IMR-90 (cell line): ENCODE measurements at regions of chr3 and their contacts with region 1.

Region 1: DNA sequence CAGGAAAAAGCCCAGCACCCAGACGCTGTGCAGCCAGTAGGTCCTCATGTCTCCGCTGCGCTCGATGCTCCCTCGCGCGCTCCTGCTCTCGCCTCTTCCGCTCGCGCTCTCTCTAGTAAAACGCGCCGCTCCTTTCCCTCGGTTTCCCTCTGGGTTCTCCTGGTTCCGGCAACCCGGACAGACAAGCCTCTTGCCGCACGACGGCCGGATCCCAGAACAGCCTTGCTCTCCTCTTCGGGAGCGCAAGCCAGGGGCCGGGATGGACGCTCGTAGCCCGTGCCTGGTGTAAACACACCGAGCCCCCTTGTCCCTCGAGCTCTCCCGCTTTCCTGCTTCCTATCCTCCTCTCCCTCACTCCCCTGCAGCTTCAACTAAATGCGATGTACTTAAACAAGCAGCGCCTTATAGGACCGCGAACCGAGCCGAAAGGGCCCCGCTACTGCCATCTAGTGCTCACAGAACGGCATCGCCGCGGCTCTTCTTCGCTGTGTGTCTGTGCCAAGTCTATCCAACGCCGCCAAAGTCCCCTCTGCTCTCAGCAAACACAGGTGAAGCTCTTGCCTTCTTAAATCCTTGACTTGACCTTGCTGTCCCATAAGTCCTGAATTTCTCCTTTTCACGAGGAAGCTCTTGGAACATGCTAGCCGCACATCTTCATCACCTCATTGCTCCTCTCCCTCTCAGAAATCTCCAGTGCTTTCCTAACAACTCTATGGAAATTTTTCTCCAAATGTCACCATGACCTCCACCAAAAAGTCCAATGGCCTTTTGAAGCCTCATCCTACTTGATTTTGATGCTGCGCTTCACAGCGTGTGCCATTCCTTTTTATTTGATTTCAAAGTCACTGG is 1037.2 kb downstream of the IGSF11 start:
- DNase-seq: peak; percentile 86
- ATAC-seq: peak; percentile 84
- H3K4me3 ChIP-seq: peak overlapping the region; percentile 72
- H3K27ac ChIP-seq: peak overlapping the region; percentile 42
- H3K4me1 ChIP-seq: peaks cover 4% of the 10 kb centered on the region; the same call in 1 of the 2 replicates
- H3K27me3 ChIP-seq: no peaks in the 10 kb centered on the region
- CTCF ChIP-seq: peak; percentile 86
- POLR2A ChIP-seq: peak; percentile 40; the same call in 1 of the 2 replicates
- RAD21 ChIP-seq: peak; percentile 87

Region 2: DNA sequence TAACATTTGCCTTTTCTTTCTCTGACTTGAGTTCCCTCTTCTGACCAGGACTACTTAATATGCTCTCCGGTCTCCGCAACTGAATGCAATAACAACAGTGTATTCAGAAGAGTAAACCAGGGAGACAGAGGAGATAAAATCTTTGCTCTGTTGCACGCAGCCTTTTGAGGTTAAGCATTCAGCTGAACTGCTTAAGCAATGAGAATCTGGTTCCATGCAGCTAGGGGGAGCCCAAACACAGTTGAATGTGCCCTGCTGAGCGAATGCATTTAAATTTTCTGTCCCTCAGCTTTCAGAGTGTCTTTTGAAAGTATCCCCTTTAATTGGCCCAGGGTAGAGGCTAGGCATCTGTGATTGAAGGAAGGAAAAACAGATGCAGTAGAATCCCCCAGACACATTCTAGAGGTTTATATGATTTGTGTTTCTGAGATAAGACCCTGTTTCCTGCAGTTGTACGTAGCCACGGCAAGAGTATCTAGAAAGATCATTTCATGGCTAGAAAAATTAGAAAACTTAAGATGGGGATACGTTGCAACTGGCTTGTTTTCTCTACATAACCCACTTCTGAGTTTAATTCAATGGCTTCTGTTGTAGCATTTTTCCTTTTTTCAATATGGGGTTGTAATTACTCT is 978.2 kb before region 1 on chr3:
- CTCF ChIA-PET with region 1: no interaction called
- POLR2A ChIA-PET with region 1: no interaction called
- dilution Hi-C with region 1: no loop called
- in situ Hi-C with region 1: loop called (anchors 10 kb)
- intact Hi-C with region 1: loop called (anchors 2 kb)
- DNase-seq: peak; percentile 76
- ATAC-seq: peak; percentile 94
- H3K4me3 ChIP-seq: no peak overlapping the region
- H3K27ac ChIP-seq: no peak overlapping the region
- H3K4me1 ChIP-seq: no peaks in the 10 kb centered on the region
- H3K27me3 ChIP-seq: no peaks in the 10 kb centered on the region
- CTCF ChIP-seq: peak; percentile 85
- POLR2A ChIP-seq: no peak
- RAD21 ChIP-seq: peak; percentile 92

Region 3: GRCh38 chr3:117526470-117527079 is 470.9 kb before region 1 on chr3:
- CTCF ChIA-PET with region 1: no interaction called
- POLR2A ChIA-PET with region 1: no interaction called
- dilution Hi-C with region 1: no loop called
- in situ Hi-C with region 1: no loop called
- intact Hi-C with region 1: loop called (anchors 1 kb)
- DNase-seq: peak; percentile 55
- ATAC-seq: peak; percentile 48; the same call in 1 of the 2 replicates
- H3K4me3 ChIP-seq: no peak overlapping the region
- H3K27ac ChIP-seq: no peak overlapping the region
- H3K4me1 ChIP-seq: peaks cover 8% of the 10 kb centered on the region
- H3K27me3 ChIP-seq: no peaks in the 10 kb centered on the region
- CTCF ChIP-seq: peak; percentile 70
- POLR2A ChIP-seq: no peak
- RAD21 ChIP-seq: peak; percentile 73

Region 4: GRCh38 chr3:117692416-117692995 is 304.9 kb before region 1 on chr3:
- CTCF ChIA-PET with region 1: no interaction called
- POLR2A ChIA-PET with region 1: no interaction called
- dilution Hi-C with region 1: no loop called
- in situ Hi-C with region 1: no loop called
- intact Hi-C with region 1: no loop called
- DNase-seq: peak; percentile 94
- ATAC-seq: peak; percentile 76
- H3K4me3 ChIP-seq: no peak overlapping the region
- H3K27ac ChIP-seq: peak overlapping the region; percentile 55
- H3K4me1 ChIP-seq: peaks cover 20% of the 10 kb centered on the region
- H3K27me3 ChIP-seq: no peaks in the 10 kb centered on the region
- CTCF ChIP-seq: no peak
- POLR2A ChIP-seq: peak; percentile 82
- RAD21 ChIP-seq: no peak

Region 5: DNA sequence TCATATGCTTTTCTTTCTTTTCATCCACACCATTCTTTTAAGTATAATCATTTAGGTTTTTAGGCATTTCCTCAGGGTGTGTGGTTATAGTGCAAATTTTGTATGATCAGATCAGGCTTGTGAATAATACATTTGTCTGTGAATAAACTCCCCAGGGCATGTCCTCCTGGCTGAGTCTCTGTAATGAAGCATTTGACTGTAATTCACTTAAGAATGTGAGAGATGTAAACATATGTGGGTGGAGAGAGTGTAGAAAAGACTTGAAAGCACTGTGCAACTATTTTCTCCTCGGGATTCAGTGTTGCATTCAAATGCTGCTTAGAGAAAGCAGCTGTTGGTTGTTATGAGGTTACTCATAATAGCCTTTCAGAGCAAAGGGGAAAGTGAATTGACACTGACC is 291.4 kb before region 1 on chr3:
- CTCF ChIA-PET with region 1: no interaction called
- POLR2A ChIA-PET with region 1: no interaction called
- dilution Hi-C with region 1: no loop called
- in situ Hi-C with region 1: no loop called
- intact Hi-C with region 1: loop called (anchors 5 kb)
- DNase-seq: peak; percentile 97
- ATAC-seq: peak; percentile 94
- H3K4me3 ChIP-seq: no peak overlapping the region
- H3K27ac ChIP-seq: peak overlapping the region; percentile 62; the same call in 1 of the 2 replicates
- H3K4me1 ChIP-seq: peaks cover 8% of the 10 kb centered on the region
- H3K27me3 ChIP-seq: no peaks in the 10 kb centered on the region
- CTCF ChIP-seq: no peak
- POLR2A ChIP-seq: no peak
- RAD21 ChIP-seq: no peak

Region 6: GRCh38 chr3:117868766-117869165 is 128.7 kb before region 1 on chr3:
- CTCF ChIA-PET with region 1: no interaction called
- POLR2A ChIA-PET with region 1: no interaction called
- dilution Hi-C with region 1: no loop called
- in situ Hi-C with region 1: no loop called
- intact Hi-C with region 1: loop called (anchors 10 kb)
- DNase-seq: peak; percentile 60
- ATAC-seq: peak; percentile 61
- H3K4me3 ChIP-seq: no peak overlapping the region
- H3K27ac ChIP-seq: no peak overlapping the region
- H3K4me1 ChIP-seq: peaks cover 2% of the 10 kb centered on the region
- H3K27me3 ChIP-seq: no peaks in the 10 kb centered on the region
- CTCF ChIP-seq: no peak
- POLR2A ChIP-seq: no peak
- RAD21 ChIP-seq: no peak

Region 7: GRCh38 chr3:117962750-117963149 is 34.7 kb before region 1 on chr3:
- CTCF ChIA-PET with region 1: no interaction called
- POLR2A ChIA-PET with region 1: no interaction called
- dilution Hi-C with region 1: no loop called
- in situ Hi-C with region 1: no loop called
- intact Hi-C with region 1: no loop called
- DNase-seq: peak; percentile 79
- ATAC-seq: peak; percentile 79
- H3K4me3 ChIP-seq: no peak overlapping the region
- H3K27ac ChIP-seq: no peak overlapping the region
- H3K4me1 ChIP-seq: peaks cover 4% of the 10 kb centered on the region
- H3K27me3 ChIP-seq: no peaks in the 10 kb centered on the region
- CTCF ChIP-seq: no peak
- POLR2A ChIP-seq: no peak
- RAD21 ChIP-seq: no peak

Region 8: GRCh38 chr3:118628704-118629341 is 631.4 kb after region 1 on chr3:
- CTCF ChIA-PET with region 1: no interaction called
- POLR2A ChIA-PET with region 1: no interaction called
- dilution Hi-C with region 1: no loop called
- in situ Hi-C with region 1: no loop called
- intact Hi-C with region 1: loop called (anchors 2 kb)
- DNase-seq: peak; percentile 72
- ATAC-seq: peak; percentile 100
- H3K4me3 ChIP-seq: no peak overlapping the region
- H3K27ac ChIP-seq: no peak overlapping the region
- H3K4me1 ChIP-seq: no peaks in the 10 kb centered on the region
- H3K27me3 ChIP-seq: no peaks in the 10 kb centered on the region
- CTCF ChIP-seq: peak; percentile 79
- POLR2A ChIP-seq: no peak
- RAD21 ChIP-seq: peak; percentile 83